Naive thymus-derived CD4-positive, alpha-beta T cell (primary cell): ENCODE measurements at regions of chr1 and their contacts with region 1.

Region 1: DNA sequence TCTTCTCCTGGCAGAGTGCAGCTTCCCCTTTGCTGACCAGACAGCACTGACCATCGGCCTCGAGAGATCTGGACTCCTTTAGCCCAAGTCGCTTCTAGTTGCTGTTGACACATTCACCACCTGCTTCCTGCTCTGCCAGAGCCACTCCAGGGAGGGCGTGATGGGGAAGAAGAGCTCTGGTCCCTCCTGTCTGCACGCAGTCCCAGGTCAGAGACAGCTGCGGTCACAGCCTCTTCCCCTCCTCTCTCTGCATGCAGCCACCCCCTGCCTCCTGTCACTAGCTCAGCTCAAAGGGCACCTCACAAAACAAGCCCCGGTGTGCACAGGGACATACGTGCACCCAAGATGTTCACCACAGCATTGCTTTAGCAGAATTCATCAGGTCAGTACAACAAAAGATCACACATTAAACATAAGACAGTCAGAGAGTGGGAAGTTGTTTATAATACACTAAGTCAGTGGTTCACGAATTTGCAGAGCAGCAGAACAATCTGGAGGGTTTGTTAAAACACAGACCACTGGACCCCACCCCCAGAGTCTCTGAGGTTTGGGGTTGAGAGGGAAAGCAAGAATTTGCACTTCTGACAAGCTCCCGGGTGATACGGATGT is 132.9 kb downstream of the SYF2 start:
- DNase-seq: peak in 1 of 9 donors; percentile 46
- ATAC-seq: peak; percentile 49
- H3K4me3 ChIP-seq: no peak overlapping the region
- H3K4me3 Mint-ChIP-seq: peak overlapping the region in 8 of 10 donors; percentile 2 to 77 (median 55)
- H3K27ac ChIP-seq: no peak overlapping the region
- H3K27ac Mint-ChIP-seq: peak overlapping the region in 7 of 9 donors; percentile 6 to 84 (median 61)
- H3K4me1 ChIP-seq: peaks cover 44 to 73% of the 10 kb centered on the region in 2 donors
- H3K4me1 Mint-ChIP-seq: peaks cover 33 to 74% (median 59%) of the 10 kb centered on the region in 7 donors
- H3K27me3 ChIP-seq: no peaks in the 10 kb centered on the region
- H3K27me3 Mint-ChIP-seq: peaks cover 0 to 4% (median 0%) of the 10 kb centered on the region in 5 donors

Region 2: GRCh38 chr1:25054526-25055323 is 44.7 kb before region 1 on chr1:
- CTCF ChIA-PET with region 1: no interaction called
- POLR2A ChIA-PET with region 1: no interaction called
- intact Hi-C with region 1: no loop called
- DNase-seq: peak in 1 of 9 donors; percentile 15
- ATAC-seq: no peak
- H3K4me3 ChIP-seq: no peak overlapping the region
- H3K4me3 Mint-ChIP-seq: no peak overlapping the region
- H3K27ac ChIP-seq: no peak overlapping the region
- H3K27ac Mint-ChIP-seq: peak overlapping the region in 1 of 9 donors; percentile 8
- H3K4me1 ChIP-seq: no peaks in the 10 kb centered on the region
- H3K4me1 Mint-ChIP-seq: peaks cover 0 to 7% (median 0%) of the 10 kb centered on the region in 7 donors
- H3K27me3 ChIP-seq: no peaks in the 10 kb centered on the region
- H3K27me3 Mint-ChIP-seq: peaks cover 0 to 60% (median 16%) of the 10 kb centered on the region in 5 donors

Region 3: GRCh38 chr1:25204797-25205480 is 105.5 kb after region 1 on chr1:
- CTCF ChIA-PET with region 1: no interaction called
- POLR2A ChIA-PET with region 1: no interaction called
- intact Hi-C with region 1: loop called in 1 of 2 experiments (anchors 10 kb)
- DNase-seq: peak in 6 of 9 donors; percentile 34 to 61 (median 52)
- ATAC-seq: peak; percentile 82
- H3K4me3 ChIP-seq: no peak overlapping the region
- H3K4me3 Mint-ChIP-seq: no peak overlapping the region
- H3K27ac ChIP-seq: no peak overlapping the region
- H3K27ac Mint-ChIP-seq: no peak overlapping the region
- H3K4me1 ChIP-seq: no peaks in the 10 kb centered on the region
- H3K4me1 Mint-ChIP-seq: no peaks in the 10 kb centered on the region
- H3K27me3 ChIP-seq: no peaks in the 10 kb centered on the region
- H3K27me3 Mint-ChIP-seq: peaks cover 0 to 38% (median 0%) of the 10 kb centered on the region in 5 donors